ENCODE measurements at regions of chr2 and their contacts with region 1.

Region 1: GRCh38 chr2:190088917-190089316 is 26.4 kb upstream of the MSTN start:
- DNase-seq: peak in 11 of 14 experiments; percentile 3 to 72 (median 13)
- ATAC-seq: peak; percentile 56
- H3K4me3 ChIP-seq: no peak overlapping the region
- H3K4me3 Mint-ChIP-seq: no peak overlapping the region
- H3K27ac ChIP-seq: no peak overlapping the region
- H3K27ac Mint-ChIP-seq: no peak overlapping the region
- H3K4me1 ChIP-seq: no peaks in the 10 kb centered on the region
- H3K4me1 Mint-ChIP-seq: no peaks in the 10 kb centered on the region
- H3K27me3 ChIP-seq: peaks cover 0 to 3% of the 10 kb centered on the region in 2 experiments
- H3K27me3 Mint-ChIP-seq: no peaks in the 10 kb centered on the region
- CTCF ChIP-seq: peak; percentile 63

Region 2: DNA sequence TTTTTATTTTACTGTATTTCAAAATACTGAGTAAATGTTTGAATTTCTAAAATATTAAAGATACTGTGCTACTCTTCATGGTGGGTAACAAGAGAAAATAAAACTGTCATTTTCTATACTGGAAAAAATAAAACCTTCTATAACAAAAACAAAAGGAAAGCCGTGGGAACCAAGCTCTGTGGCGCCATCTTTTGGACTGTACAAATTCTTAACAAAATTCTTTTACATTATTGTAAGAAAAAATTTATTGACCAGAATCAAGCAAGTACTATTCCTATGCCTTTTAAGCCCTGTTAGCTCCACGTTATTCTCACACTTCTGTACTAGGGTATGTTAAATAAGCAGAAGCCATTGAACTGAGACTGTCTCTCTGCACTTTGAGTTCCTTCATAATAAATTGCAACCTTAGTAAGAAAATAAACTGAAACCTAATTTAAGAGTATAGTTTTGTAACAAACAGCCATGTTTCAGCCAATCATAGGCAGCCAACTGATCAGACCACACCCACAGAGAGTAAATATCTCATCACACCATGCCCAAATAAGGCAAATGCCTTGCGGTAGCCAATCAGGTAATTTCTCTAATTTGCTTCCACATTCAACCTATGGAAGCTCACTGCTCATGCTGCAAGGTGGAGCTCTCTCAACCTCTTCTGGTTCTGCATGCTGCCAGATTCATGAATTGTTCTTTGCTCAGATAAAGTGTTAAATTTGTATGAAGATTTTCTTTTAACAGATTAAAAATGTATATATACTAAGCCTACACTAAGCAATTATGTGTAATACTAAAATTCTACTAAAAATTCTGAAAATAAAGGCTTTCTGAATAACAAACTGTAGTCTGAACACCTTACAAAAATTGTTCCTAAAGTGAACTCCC is 188.6 kb after region 1 on chr2:
- CTCF ChIA-PET with region 1: no interaction called
- POLR2A ChIA-PET with region 1: no interaction called
- intact Hi-C with region 1: loop called in 1 of 2 experiments (anchors 2 kb)
- DNase-seq: peak in 4 of 14 experiments; percentile 15 to 43 (median 30)
- ATAC-seq: peak; percentile 56
- H3K4me3 ChIP-seq: no peak overlapping the region
- H3K4me3 Mint-ChIP-seq: no peak overlapping the region
- H3K27ac ChIP-seq: no peak overlapping the region
- H3K27ac Mint-ChIP-seq: no peak overlapping the region
- H3K4me1 ChIP-seq: no peaks in the 10 kb centered on the region
- H3K4me1 Mint-ChIP-seq: no peaks in the 10 kb centered on the region
- H3K27me3 ChIP-seq: no peaks in the 10 kb centered on the region
- H3K27me3 Mint-ChIP-seq: no peaks in the 10 kb centered on the region
- CTCF ChIP-seq: peak; percentile 62

Region 3: GRCh38 chr2:190313880-190314279 is 225.0 kb after region 1 on chr2:
- CTCF ChIA-PET with region 1: no interaction called
- POLR2A ChIA-PET with region 1: no interaction called
- intact Hi-C with region 1: loop called in 1 of 2 experiments (anchors 1 kb)
- DNase-seq: no peak
- ATAC-seq: no peak
- H3K4me3 ChIP-seq: no peak overlapping the region
- H3K4me3 Mint-ChIP-seq: no peak overlapping the region
- H3K27ac ChIP-seq: no peak overlapping the region
- H3K27ac Mint-ChIP-seq: no peak overlapping the region
- H3K4me1 ChIP-seq: peaks cover 18% of the 10 kb centered on the region
- H3K4me1 Mint-ChIP-seq: peaks cover 41% of the 10 kb centered on the region
- H3K27me3 ChIP-seq: no peaks in the 10 kb centered on the region
- H3K27me3 Mint-ChIP-seq: no peaks in the 10 kb centered on the region
- CTCF ChIP-seq: no peak

Region 4: DNA sequence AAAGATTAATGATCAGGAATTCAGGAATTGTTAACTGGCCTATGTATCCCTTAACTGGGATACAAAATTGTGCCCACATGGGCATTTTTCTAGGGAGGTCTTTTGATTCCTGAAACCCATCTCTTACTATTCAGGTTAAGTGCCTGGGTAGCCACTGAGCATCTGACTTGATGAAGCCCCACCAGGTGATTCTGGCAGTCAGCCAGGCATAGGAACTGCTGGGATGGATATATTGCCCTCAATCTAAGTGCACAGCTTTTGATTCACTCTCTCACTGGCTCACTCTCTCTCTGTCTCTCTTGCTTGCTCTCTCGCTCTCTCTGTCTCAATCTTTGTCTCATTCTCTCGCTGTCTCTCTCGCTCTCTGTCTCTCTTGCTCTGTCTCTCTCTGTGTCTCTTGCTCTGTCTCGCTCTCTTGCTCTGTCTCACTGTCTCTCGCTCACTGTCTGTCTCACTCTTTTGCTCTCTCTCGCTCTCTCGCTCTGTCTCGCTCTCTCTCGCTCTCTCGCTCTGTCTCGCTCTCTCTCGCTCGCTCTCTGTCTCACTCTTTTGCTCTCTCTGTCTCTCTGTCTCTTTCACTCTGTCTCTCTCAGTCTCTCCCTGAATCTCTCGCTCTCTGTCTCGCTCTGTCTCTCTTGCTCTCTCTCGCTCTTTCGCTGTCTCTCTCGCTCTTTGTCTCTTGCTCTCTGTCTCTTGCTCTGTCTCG is 276.7 kb after region 1 on chr2:
- CTCF ChIA-PET with region 1: no interaction called
- POLR2A ChIA-PET with region 1: no interaction called
- intact Hi-C with region 1: loop called in 1 of 2 experiments (anchors 2 kb)
- DNase-seq: peak in 1 of 14 experiments; percentile 7
- ATAC-seq: no peak
- H3K4me3 ChIP-seq: no peak overlapping the region
- H3K4me3 Mint-ChIP-seq: no peak overlapping the region
- H3K27ac ChIP-seq: no peak overlapping the region
- H3K27ac Mint-ChIP-seq: no peak overlapping the region
- H3K4me1 ChIP-seq: no peaks in the 10 kb centered on the region
- H3K4me1 Mint-ChIP-seq: peaks cover 17% of the 10 kb centered on the region
- H3K27me3 ChIP-seq: no peaks in the 10 kb centered on the region
- H3K27me3 Mint-ChIP-seq: no peaks in the 10 kb centered on the region
- CTCF ChIP-seq: no peak

Region 5: DNA sequence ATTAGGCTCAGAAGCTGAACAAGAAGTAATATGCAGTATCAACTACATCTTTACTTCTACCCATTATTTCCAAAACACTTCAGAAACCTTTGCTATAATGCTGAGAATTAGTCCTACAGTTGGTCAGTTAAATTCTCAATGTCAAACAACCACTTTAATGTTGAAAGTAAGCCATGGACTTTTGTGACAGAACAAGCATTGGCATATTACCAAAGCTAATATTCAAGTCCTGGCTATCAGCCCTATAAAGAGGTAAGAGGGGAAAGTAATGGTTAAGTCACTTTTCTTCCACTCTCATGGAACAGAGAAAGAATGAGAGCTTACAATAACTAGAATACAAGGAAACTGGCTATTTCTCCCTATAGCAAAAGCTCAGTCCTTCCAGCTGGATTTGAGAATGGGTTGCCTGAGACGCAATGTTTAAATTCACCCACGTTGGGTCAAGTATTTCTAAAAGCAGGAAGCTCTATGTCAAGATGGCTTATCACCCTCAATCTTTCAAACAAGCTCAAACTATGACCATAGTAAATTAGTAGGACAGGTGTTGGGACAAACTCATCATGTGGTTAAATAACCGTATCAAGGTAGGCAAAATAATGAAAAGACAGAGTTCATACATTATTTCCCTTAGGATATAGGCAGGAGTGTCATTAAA is 287.8 kb after region 1 on chr2:
- CTCF ChIA-PET with region 1: no interaction called
- POLR2A ChIA-PET with region 1: no interaction called
- intact Hi-C with region 1: loop called (anchors 1 to 2 kb)
- DNase-seq: no peak
- ATAC-seq: no peak
- H3K4me3 ChIP-seq: no peak overlapping the region
- H3K4me3 Mint-ChIP-seq: no peak overlapping the region
- H3K27ac ChIP-seq: no peak overlapping the region
- H3K27ac Mint-ChIP-seq: no peak overlapping the region
- H3K4me1 ChIP-seq: no peaks in the 10 kb centered on the region
- H3K4me1 Mint-ChIP-seq: no peaks in the 10 kb centered on the region
- H3K27me3 ChIP-seq: no peaks in the 10 kb centered on the region
- H3K27me3 Mint-ChIP-seq: no peaks in the 10 kb centered on the region
- CTCF ChIP-seq: no peak

Region 6: DNA sequence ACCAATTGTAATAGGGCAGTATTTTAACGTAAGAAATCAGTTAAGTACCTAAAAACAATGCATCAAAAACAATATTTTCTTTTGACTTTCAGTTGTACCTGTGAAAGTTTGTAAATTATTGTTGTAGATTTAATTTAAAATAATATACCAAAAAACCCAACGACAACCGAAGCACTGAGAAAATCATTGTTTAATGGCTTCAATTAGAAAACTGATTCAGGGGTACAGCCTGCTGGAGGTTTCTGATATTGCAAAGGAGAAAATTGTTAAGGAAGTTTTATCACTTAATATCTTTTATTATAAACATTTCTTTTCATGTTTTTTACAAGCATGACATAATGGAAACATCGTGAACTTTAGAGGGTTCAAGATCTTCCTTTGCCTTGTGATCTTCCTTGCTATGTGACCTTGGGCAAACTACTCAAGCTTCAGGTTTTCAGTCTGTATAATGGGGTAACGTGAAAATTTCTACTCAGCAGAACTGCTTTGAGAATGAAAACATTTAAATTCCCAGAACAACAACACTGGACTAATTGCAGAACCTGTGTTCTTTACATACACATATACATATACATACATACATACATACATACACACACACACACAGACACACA is 715.4 kb after region 1 on chr2:
- CTCF ChIA-PET with region 1: interaction called, 3 read pairs
- POLR2A ChIA-PET with region 1: no interaction called
- intact Hi-C with region 1: loop called (anchors 2 kb)
- DNase-seq: peak in 4 of 14 experiments; percentile 17 to 31 (median 20)
- ATAC-seq: no peak
- H3K4me3 ChIP-seq: no peak overlapping the region
- H3K4me3 Mint-ChIP-seq: no peak overlapping the region
- H3K27ac ChIP-seq: no peak overlapping the region
- H3K27ac Mint-ChIP-seq: no peak overlapping the region
- H3K4me1 ChIP-seq: no peaks in the 10 kb centered on the region
- H3K4me1 Mint-ChIP-seq: no peaks in the 10 kb centered on the region
- H3K27me3 ChIP-seq: no peaks in the 10 kb centered on the region
- H3K27me3 Mint-ChIP-seq: no peaks in the 10 kb centered on the region
- CTCF ChIP-seq: peak; percentile 55

Region 7: DNA sequence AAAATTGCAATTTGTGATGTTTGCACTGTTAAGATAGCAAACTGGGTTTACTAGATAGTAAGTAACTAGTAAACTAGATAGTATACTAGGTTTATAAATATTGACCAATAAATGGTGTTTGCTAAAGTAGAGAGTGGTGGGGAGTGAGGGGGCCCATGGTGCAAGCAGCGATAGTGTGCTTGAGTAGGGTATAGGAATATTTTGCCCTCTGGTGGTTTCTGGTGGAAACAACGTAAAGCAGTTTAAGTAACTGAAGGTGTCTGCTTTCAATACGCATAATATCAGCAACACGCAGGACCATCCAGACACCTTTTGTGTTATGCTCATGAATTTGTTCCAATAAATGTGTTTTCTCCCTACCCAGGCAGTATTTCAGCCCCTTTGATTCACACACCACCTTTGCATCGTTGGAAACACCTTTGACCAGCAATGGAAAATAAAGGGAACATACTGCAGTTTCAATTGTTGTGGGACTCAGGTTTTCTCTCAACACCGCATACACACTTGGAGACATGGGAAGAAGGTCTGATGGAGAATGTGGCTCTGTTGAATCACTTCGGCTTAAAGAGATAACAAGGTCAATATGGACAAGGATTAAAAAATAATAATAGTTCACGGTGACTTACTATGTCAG is 941.7 kb after region 1 on chr2:
- CTCF ChIA-PET with region 1: no interaction called
- POLR2A ChIA-PET with region 1: no interaction called
- intact Hi-C with region 1: loop called in 1 of 2 experiments (anchors 5 kb)
- DNase-seq: peak in 6 of 14 experiments; percentile 33 to 82 (median 65)
- ATAC-seq: peak; percentile 95
- H3K4me3 ChIP-seq: no peak overlapping the region
- H3K4me3 Mint-ChIP-seq: no peak overlapping the region
- H3K27ac ChIP-seq: no peak overlapping the region
- H3K27ac Mint-ChIP-seq: peak overlapping the region; percentile 5
- H3K4me1 ChIP-seq: peaks cover 23% of the 10 kb centered on the region
- H3K4me1 Mint-ChIP-seq: peaks cover 28% of the 10 kb centered on the region
- H3K27me3 ChIP-seq: no peaks in the 10 kb centered on the region
- H3K27me3 Mint-ChIP-seq: no peaks in the 10 kb centered on the region
- CTCF ChIP-seq: peak; percentile 85